Cardiac septum (tissue), 1 donor: ENCODE measurements at regions of chr3 and their contacts with region 1.

Region 1: GRCh38 chr3:11155341-11156025 is 1.2 kb downstream of the HRH1 start:
- DNase-seq: peak; percentile 83

Region 2: DNA sequence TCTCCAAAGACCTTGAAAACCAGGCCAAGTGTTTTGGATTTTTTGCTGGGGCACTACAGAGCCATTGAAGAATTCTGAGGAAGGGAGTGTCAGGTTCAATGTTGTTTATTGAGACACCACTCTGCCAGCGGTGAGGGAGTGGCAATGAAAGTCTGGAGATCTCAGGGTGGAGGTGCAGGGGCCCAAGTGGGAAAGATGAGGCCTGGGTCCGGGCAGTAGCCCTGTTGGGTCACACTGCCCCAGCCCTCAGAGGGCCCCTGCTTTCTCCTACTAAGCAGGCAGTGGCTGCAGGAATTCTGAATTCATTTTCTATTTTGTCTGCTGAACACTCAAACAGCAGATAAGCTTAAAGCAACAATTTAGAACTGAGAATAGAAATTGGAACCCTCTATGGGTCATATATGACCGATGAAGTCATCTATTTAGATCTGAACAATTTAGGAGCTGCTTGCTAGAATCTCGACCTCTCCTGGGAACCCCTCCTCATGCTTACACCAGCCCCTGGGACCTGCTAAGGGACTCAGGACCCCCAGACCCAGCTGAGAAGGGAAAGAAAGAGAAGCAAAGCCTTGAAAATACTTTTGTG is 16.7 kb after region 1 on chr3:
- intact Hi-C with region 1: no loop called
- DNase-seq: peak; percentile 36

Region 3: DNA sequence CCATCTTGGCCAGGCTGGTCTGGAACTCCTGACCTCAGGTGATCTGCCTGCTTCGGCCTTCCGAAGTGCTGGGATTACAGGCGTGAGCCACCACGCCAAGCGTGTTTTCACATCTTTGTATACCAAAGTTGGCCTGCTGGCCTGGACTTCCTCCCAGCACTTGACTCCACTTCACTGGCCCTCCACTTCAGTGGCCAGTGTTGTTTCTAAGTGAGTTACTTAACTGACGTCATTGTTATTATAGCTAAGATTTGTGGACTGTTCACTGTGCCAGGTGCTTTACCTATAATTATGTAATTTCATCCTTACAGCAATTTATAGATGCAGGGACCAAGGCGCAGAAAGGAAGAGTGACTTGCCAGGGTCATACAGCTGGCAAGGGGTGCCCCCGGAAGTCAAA is 50.8 kb after region 1 on chr3:
- intact Hi-C with region 1: loop called (anchors 1 kb)
- DNase-seq: no peak

Region 4: GRCh38 chr3:11482021-11482420 is 326.5 kb after region 1 on chr3:
- intact Hi-C with region 1: no loop called
- DNase-seq: no peak

Region 5: DNA sequence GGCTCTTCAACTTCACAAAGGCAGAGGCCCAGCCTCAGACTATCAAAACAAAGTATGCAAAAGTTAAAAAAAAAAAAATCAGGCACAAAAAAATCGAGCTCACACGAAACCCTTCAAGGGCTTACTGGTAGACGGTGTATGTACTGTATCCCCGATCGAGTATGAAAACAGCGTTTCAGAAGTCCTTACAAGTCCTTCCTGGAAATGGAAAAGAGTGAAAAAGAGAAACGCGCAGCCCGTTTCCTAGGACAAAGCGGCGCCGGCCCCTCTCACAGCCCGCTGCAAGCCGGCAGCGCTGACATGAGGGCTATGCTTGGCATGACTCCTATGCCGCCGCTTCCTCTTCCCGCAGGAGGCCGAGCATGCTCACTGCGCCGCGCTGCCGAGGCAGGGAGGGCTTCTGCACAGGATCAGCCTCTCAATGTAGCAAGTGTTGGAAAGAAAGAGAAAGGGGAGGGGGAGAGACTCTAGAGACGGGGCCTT is 488.2 kb after region 1 on chr3 and contains the start of gene VGLL4:
- intact Hi-C with region 1: no loop called
- DNase-seq: peak; percentile 97
- total RNA-seq, gene VGLL4: 40.7 TPM